ENCODE measurements at regions of chr16 and their contacts with region 1.

Region 1: GRCh38 chr16:4957720-4958509 is at the start of gene SEC14L5:
- DNase-seq: peak; percentile 97 to 98
- ATAC-seq: peak; percentile 96 to 99 (median 97)
- H3K4me3 ChIP-seq: peak within 1 kb of the TSS; percentile 73
- H3K27ac ChIP-seq: peak within 1 kb of the TSS; percentile 58
- H3K4me1 ChIP-seq: peaks cover 13% of the 10 kb centered on the region
- H3K27me3 ChIP-seq: no peaks in the 10 kb centered on the region
- CTCF ChIP-seq: no peak
- total RNA-seq, gene SEC14L5: 0.42 to 0.88 (median 0.65) TPM

Region 2: GRCh38 chr16:4506450-4506849 is 451.5 kb before region 1 on chr16:
- intact Hi-C with region 1: loop called (anchors 10 kb)
- DNase-seq: no peak
- ATAC-seq: peak; percentile 84 to 94 (median 91)
- H3K4me3 ChIP-seq: no peak overlapping the region
- H3K27ac ChIP-seq: peak overlapping the region; percentile 14
- H3K4me1 ChIP-seq: no peaks in the 10 kb centered on the region
- H3K27me3 ChIP-seq: no peaks in the 10 kb centered on the region
- CTCF ChIP-seq: peak; percentile 85

Region 3: DNA sequence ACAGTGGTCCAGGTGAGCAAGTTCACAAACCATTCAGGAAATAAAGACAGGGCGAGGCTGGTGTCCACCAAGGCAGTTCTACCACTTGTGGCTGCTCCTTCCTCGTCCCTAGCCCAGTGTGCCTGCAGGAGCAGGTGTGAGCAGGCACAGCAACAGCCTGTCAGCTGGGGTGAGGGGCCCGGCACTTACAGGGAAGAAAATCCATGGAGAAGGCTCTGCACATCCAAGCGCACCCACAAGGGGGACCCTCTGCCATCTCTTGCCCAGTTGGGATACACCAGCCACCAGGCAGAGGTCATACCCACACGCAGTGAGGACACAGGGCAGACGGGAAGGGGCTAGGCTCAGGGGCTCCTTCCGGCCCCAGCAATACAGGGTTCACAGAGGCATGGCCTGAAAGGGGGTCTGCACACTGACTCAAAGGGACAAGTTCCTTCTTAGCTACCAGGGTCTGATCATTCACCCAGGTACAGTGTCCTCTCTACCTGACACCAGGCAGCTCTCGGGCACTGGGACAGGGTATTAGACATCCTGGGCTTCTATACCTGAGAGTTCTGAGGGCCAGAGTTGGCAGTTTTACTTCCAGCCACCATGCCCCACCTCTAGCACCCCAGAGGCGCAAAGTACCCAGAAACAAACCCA is 446.4 kb before region 1 on chr16:
- intact Hi-C with region 1: loop called (anchors 10 kb)
- DNase-seq: no peak
- ATAC-seq: peak; percentile 53 to 68 (median 58)
- H3K4me3 ChIP-seq: no peak overlapping the region
- H3K27ac ChIP-seq: no peak overlapping the region
- H3K4me1 ChIP-seq: peaks cover 4% of the 10 kb centered on the region
- H3K27me3 ChIP-seq: no peaks in the 10 kb centered on the region
- CTCF ChIP-seq: peak; percentile 45

Region 4: DNA sequence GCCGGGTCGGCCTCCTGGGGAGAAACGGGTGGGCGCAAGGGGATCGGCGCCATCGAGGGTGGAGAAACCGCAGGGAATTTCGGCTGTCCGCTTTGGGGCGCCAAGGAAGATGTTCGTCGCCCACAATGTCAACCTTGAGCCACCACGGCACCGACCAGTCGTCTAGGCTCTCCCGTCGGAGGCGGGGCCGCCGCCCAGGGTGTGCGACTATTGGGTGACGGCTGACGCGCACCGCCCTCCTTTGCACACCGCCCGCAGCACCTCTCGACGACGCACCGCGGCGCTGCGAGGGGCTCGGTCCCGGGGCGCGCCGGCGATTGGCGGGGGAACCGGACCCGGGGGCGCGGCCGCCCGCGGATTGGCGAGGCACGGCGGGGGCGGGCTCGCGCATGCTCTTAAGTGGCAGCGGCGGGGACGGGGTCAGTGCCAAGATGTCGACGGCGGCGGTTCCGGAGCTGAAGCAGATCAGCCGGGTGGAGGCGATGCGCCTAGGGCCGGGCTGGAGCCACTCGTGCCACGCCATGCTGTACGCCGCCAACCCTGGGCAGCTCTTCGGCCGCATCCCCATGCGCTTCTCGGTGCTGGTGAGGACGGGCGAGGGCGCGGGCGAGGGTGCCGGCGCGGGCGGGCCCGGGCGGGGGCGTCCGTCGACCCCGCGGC is 264.5 kb before region 1 on chr16 and contains the start of gene NUDT16L1:
- intact Hi-C with region 1: loop called in 1 of 2 experiments (anchors 10 kb)
- DNase-seq: peak; percentile 98
- ATAC-seq: peak; percentile 89 to 93 (median 92)
- H3K4me3 ChIP-seq: peak within 1 kb of the TSS; percentile 92
- H3K27ac ChIP-seq: peak within 1 kb of the TSS; percentile 82
- H3K4me1 ChIP-seq: peaks cover 12% of the 10 kb centered on the region
- H3K27me3 ChIP-seq: no peaks in the 10 kb centered on the region
- CTCF ChIP-seq: peak; percentile 29
- total RNA-seq, gene NUDT16L1: 6.3 to 20.2 (median 8.4) TPM

Region 5: DNA sequence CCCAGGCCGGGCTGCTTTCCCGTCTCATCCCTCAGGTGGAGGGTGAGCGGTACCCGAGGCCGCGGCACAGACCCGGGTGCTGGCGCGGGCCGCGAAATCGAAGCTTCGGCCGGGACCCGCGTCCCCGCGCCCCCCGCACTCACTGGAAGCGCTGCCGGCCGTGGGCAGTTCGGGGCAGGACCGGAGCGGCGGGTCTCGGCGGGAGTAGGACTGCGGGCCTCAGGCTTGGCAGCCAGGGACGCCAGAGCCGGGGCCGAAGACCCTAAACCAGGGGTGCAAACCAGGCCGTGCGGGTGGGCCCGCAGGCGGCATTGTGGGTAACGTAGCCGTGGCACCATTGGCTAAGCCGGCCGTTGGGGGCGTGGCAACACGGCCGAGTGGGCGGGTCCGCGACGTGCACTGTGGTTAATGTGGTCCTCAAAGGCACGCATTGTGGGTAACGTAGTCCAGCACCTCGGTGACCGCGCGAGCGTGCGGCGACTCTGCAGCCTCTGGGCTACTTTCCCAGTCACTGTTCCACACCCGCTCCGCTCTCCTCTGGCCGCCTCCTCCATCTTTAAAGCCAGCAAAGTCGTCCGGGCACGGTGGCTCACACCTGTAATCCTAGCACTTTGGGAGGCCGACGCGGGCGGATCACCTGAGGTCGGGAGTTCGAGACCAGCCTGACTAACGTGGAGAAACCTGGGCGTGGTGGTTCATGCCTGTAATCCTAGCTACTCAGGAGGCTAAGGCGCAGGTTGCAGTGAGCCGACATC is 190.9 kb before region 1 on chr16 and contains the start of gene ZNF500:
- intact Hi-C with region 1: loop called in 1 of 2 experiments (anchors 10 kb)
- DNase-seq: peak; percentile 99
- ATAC-seq: peak; percentile 92 to 97 (median 94)
- H3K4me3 ChIP-seq: peak within 1 kb of the TSS; percentile 77
- H3K27ac ChIP-seq: peak within 1 kb of the TSS; percentile 78
- H3K4me1 ChIP-seq: peaks cover 19% of the 10 kb centered on the region
- H3K27me3 ChIP-seq: no peaks in the 10 kb centered on the region
- CTCF ChIP-seq: no peak
- total RNA-seq, gene ZNF500: 4.8 to 8.9 (median 7.9) TPM

Region 6: GRCh38 chr16:4846891-4847773 is 110.8 kb before region 1 on chr16 and contains the starts of genes GLYR1 and UBN1:
- intact Hi-C with region 1: loop called in 1 of 2 experiments (anchors 5 kb)
- DNase-seq: peak; percentile 100
- ATAC-seq: peak; percentile 95 to 96 (median 96)
- H3K4me3 ChIP-seq: peak within 1 kb of the TSS; percentile 98
- H3K27ac ChIP-seq: peak within 1 kb of the TSS; percentile 99
- H3K4me1 ChIP-seq: peaks cover 56% of the 10 kb centered on the region
- H3K27me3 ChIP-seq: no peaks in the 10 kb centered on the region
- CTCF ChIP-seq: no peak
- total RNA-seq, gene GLYR1: 53.3 to 74.1 (median 66.8) TPM
- total RNA-seq, gene UBN1: 25.5 to 33.3 (median 28.0) TPM

Region 7: GRCh38 chr16:5018793-5019192 is 60.9 kb after region 1 on chr16:
- intact Hi-C with region 1: no loop called
- DNase-seq: no peak
- ATAC-seq: no peak
- H3K4me3 ChIP-seq: no peak overlapping the region
- H3K27ac ChIP-seq: no peak overlapping the region
- H3K4me1 ChIP-seq: no peaks in the 10 kb centered on the region
- H3K27me3 ChIP-seq: peaks cover 0 to 3% (median 0%) of the 10 kb centered on the region in 3 donors
- CTCF ChIP-seq: no peak

Measured in psoas muscle (tissue), 8 donors.